Tibial artery (tissue), 4 donors: ENCODE measurements at regions of chr12 and their contacts with region 1.

Region 1: DNA sequence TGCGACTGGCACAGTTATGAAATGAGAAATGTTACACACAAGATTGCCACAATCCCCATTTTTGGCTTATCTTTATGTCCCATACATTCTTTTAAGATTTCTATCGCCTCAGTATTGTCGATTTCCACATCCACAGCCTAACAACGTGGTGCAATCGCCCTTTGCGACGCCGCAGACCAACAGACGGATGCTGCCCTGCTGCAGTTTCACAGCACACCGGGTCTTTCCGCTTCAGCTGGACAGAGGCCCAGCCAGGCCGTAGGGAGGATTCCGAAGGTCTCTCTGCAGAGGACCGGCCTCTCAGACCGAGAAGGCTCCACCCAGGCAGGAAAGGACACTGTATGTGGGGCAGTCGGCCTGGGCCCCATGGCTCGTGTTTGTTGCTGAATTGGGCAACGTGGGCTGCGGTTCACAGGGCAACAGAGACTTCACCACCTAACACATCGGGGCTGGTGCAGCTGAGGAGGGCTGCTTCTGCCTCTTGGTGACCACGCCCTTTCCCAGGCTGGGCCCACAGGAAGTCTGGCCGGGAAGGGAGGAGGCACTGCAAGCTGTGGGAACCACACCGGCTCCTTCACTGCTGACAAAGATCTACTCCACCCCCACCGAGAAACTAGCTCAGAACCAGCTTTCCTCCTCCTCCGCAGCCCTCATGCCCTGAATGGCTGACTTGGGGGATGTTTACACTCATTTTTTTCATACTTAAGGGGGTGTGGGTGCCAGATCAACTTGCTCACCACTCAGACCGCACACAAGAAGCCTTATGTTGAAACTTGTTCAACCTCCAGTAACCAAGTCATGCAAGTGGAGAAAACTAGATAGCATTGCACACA is 32.9 kb upstream of the MDM1 start:
- DNase-seq: peak; percentile 95 to 98
- H3K4me3 ChIP-seq: peak overlapping the region; percentile 45 to 50
- H3K27ac ChIP-seq: peak overlapping the region; percentile 76 to 79
- H3K4me1 ChIP-seq: peaks cover 3 to 22% (median 13%) of the 10 kb centered on the region in 4 donors
- H3K27me3 ChIP-seq: no peaks in the 10 kb centered on the region
- CTCF ChIP-seq: no peak

Region 2: DNA sequence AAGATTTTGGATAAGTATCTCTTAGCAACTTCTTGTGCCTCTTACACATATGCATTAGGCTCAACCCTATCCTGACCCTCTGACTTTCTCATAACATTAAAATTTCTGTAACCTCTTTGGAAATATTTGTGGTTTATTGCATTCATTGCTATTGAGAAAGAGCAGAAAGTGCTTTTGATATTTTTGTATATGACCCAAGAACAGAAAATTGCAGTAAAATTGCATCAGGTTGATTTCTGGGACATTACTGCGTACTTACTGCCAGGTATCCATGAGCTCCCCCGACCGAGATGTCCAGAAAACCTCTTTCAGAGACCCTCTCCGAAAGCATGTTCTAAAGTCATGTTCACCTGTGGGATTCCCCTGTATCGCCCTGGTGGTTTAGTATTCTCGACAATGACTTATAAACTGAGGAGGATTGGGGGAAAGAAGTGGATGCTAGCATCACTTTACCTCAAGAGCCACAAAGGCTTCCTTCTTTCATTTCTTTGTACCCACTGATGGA is 97.2 kb before region 1 on chr12:
- intact Hi-C with region 1: no loop called
- DNase-seq: no peak
- H3K4me3 ChIP-seq: no peak overlapping the region
- H3K27ac ChIP-seq: no peak overlapping the region
- H3K4me1 ChIP-seq: peaks cover 0 to 5% (median 0%) of the 10 kb centered on the region in 4 donors
- H3K27me3 ChIP-seq: no peaks in the 10 kb centered on the region
- CTCF ChIP-seq: no peak

Region 3: GRCh38 chr12:68610370-68611093 is 245.4 kb after region 1 on chr12 and contains the start of gene RAP1B:
- intact Hi-C with region 1: loop called (anchors 5 kb)
- DNase-seq: peak; percentile 82 to 94
- H3K4me3 ChIP-seq: peak within 1 kb of the TSS; percentile 57 to 80
- H3K27ac ChIP-seq: peak within 1 kb of the TSS; percentile 88 to 96
- H3K4me1 ChIP-seq: peaks cover 0 to 41% (median 22%) of the 10 kb centered on the region in 4 donors
- H3K27me3 ChIP-seq: no peaks in the 10 kb centered on the region
- CTCF ChIP-seq: no peak

Region 4: DNA sequence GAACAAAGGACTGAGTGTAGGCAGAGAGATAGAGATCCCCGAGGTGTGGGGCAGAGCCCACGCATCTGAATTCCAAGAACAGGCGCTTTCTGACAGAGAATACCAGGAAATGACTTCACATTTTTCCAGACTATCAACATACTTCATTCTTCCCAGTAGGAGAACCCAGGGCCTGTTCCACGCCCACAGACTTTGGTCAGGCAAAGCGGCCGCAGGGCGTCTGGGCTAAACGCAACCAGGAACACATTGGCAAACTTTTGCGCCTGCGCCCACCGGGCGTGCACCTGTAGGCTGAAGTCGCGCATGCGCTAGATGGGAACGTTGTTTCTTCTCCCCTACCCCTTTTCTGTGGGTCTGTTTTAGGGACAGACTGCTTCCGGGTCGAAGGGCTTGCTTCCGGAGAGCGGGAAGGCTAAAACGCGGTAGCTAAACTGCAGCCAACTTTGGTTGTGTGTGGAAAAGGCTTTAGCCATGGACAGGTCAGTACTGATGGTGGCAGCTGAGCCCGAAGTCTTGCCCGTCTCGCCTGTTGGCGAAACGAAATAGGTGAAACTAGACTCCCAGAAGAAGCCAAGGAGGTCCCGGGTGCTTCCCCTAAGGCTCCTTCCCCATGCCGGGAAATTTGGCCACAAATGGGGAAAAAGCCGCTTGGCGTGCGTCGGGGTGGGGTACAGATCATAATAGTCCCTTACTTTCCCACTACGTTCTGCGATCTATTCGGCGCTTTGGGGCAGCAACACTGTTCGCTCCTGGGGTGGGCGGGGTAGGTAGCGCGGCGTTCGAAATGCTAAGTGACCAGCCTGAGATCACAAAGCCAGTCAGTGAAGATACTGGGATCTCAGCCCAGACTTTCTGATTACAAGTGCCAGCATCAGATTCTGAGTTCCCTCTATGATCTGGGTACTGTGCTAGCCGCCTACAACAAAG is 321.7 kb after region 1 on chr12 and contains the start of gene NUP107:
- intact Hi-C with region 1: loop called (anchors 10 kb)
- DNase-seq: peak; percentile 99
- H3K4me3 ChIP-seq: peak within 1 kb of the TSS; percentile 67 to 78
- H3K27ac ChIP-seq: peak within 1 kb of the TSS; percentile 69 to 80
- H3K4me1 ChIP-seq: peaks cover 0 to 12% (median 12%) of the 10 kb centered on the region in 4 donors
- H3K27me3 ChIP-seq: no peaks in the 10 kb centered on the region
- CTCF ChIP-seq: peak; percentile 29

Region 5: GRCh38 chr12:68745904-68746571 is 380.9 kb after region 1 on chr12 and contains the start of gene SLC35E3:
- intact Hi-C with region 1: loop called (anchors 10 kb)
- DNase-seq: peak; percentile 92 to 95
- H3K4me3 ChIP-seq: peak within 1 kb of the TSS; percentile 74 to 79
- H3K27ac ChIP-seq: peak within 1 kb of the TSS; percentile 73 to 84
- H3K4me1 ChIP-seq: peaks cover 0 to 21% (median 11%) of the 10 kb centered on the region in 4 donors
- H3K27me3 ChIP-seq: no peaks in the 10 kb centered on the region
- CTCF ChIP-seq: no peak